ENCODE measurements at regions of chr6 and their contacts with region 1.

Region 1: GRCh38 chr6:118776607-118777549 is 117.1 kb upstream of the ASF1A start:
- DNase-seq: peak; percentile 20
- ATAC-seq: peak; percentile 95
- H3K4me3 ChIP-seq: no peak overlapping the region
- H3K27ac ChIP-seq: no peak overlapping the region
- H3K4me1 ChIP-seq: peaks cover 3% of the 10 kb centered on the region; the same call in 1 of the 2 replicates
- H3K27me3 ChIP-seq: peaks cover 0 to 2% of the 10 kb centered on the region in 2 experiments; a peak in 1 of 4 replicates
- CTCF ChIP-seq: peak; percentile 70 to 74 (median 71)
- EP300 ChIP-seq: no peak
- POLR2A ChIP-seq: no peak
- RAD21 ChIP-seq: peak; percentile 77

Region 2: GRCh38 chr6:117976030-117976651 is 800.7 kb before region 1 on chr6:
- CTCF ChIA-PET with region 1: interaction called, 3 read pairs
- POLR2A ChIA-PET with region 1: no interaction called
- RAD21 ChIA-PET with region 1: no interaction called
- SMC1A ChIA-PET with region 1: no interaction called
- in situ Hi-C with region 1: loop called (anchors 25 kb)
- intact Hi-C with region 1: no loop called
- DNase-seq: no peak
- ATAC-seq: peak; percentile 76
- H3K4me3 ChIP-seq: no peak overlapping the region
- H3K27ac ChIP-seq: no peak overlapping the region
- H3K4me1 ChIP-seq: no peaks in the 10 kb centered on the region
- H3K27me3 ChIP-seq: no peaks in the 10 kb centered on the region
- CTCF ChIP-seq: peak; percentile 61 to 63 (median 62)
- EP300 ChIP-seq: no peak
- POLR2A ChIP-seq: no peak
- RAD21 ChIP-seq: peak; percentile 62

Region 3: DNA sequence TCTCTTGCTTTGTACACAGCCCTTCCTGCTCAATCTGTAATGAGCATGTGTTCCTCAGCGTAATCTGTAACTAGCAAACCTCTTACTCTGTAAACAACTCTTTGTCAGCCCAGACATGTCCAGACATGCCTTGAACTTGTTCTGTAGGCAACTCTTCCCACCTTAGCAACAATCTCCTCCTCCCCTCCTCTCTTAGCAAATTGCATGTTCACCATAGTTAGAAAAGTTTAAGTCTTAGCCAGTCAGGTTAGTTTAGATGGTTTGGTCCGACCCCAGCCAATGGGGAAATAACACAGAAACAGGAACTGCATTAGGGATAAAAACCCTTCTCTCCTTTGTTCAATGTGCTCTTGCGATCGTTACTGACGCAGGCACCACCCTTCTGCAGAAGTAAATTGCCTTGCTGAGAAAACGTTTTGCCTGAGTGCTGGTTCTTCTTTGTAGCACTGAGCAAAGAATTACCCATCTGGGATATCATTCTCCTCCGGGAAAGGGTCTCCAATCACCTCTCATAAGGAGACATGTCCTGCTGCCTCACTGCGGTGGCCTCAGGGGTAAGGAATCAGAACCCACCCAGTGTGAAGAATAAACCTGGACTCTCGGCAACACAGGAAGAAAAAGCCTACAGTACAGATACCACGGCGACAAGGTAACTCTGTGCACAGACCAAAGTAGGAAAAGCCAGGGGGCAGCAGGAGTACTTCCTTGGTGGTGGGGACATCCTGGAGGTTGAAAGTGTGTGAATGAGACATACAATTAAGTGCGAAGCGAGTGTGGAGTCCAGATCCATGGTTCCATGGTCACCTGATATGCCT is 202.6 kb before region 1 on chr6:
- CTCF ChIA-PET with region 1: no interaction called
- POLR2A ChIA-PET with region 1: no interaction called
- RAD21 ChIA-PET with region 1: no interaction called
- SMC1A ChIA-PET with region 1: no interaction called
- in situ Hi-C with region 1: loop called (anchors 10 kb)
- intact Hi-C with region 1: no loop called
- DNase-seq: no peak
- ATAC-seq: no peak
- H3K4me3 ChIP-seq: no peak overlapping the region
- H3K27ac ChIP-seq: 0 out of 2 replicates have a peak overlapping the region, but pooled peaks have one; percentile 19
- H3K4me1 ChIP-seq: no peaks in the 10 kb centered on the region
- H3K27me3 ChIP-seq: no peaks in the 10 kb centered on the region
- CTCF ChIP-seq: no peak
- EP300 ChIP-seq: no peak
- POLR2A ChIP-seq: no peak
- RAD21 ChIP-seq: no peak

Region 4: GRCh38 chr6:118651282-118652050 is 125.4 kb before region 1 on chr6 and contains the start of gene CEP85L:
- CTCF ChIA-PET with region 1: no interaction called
- POLR2A ChIA-PET with region 1: no interaction called
- RAD21 ChIA-PET with region 1: no interaction called
- SMC1A ChIA-PET with region 1: no interaction called
- in situ Hi-C with region 1: no loop called
- intact Hi-C with region 1: loop called (anchors 5 kb)
- DNase-seq: peak; percentile 34
- ATAC-seq: peak; percentile 94
- H3K4me3 ChIP-seq: peak within 1 kb of the TSS; percentile 92
- H3K27ac ChIP-seq: peak within 1 kb of the TSS; percentile 71
- H3K4me1 ChIP-seq: peaks cover 5% of the 10 kb centered on the region
- H3K27me3 ChIP-seq: no peaks in the 10 kb centered on the region
- CTCF ChIP-seq: no peak
- EP300 ChIP-seq: no peak
- POLR2A ChIP-seq: peak; percentile 90
- RAD21 ChIP-seq: no peak
- polyA plus RNA-seq, gene CEP85L: 1.8 to 3.7 TPM

Region 5: DNA sequence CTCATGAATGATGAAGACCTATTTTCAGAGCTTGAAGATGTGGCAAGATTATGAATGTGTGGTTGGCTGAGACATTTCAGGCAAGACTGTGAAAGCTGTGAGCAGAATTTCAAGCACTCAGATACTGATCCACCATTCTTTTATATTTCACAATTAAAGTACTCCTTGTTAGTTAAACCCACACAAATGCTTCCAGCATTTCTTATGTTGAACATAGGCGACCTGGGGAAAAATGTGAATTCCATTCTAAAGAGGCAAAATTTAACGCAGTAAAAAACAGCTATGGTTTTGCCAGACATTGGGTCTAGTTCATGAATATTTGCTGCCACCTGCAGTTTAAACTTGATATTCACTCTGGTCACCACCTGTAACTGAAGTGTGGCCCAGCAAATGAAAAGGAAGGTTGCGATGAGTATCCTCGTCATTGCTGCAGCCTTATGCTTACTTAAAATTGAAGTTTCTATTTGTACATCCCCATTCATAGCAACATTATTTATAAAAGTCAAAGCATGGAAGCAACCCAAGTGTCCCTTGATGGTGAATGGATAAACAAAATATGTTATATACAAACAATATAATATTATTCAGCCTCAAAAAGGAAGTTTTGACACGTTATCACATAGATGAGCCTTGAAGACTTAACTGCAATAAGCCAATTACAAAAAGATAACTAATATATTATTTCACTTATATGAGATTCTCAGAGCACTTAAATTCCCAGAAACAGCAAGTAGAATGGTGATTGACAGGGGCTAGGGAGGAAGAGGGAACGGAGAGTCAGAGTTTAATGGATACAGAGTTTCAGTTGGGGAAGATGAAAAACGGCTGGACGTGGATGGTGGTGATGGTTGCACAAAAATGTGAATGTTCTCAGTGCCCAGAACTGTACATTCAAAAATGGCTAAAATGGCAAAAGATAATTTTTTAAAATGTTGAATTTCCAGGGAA is 334.0 kb after region 1 on chr6:
- CTCF ChIA-PET with region 1: interaction called, 4 read pairs
- POLR2A ChIA-PET with region 1: no interaction called
- RAD21 ChIA-PET with region 1: interaction called, 4 read pairs
- SMC1A ChIA-PET with region 1: no interaction called
- in situ Hi-C with region 1: no loop called
- intact Hi-C with region 1: loop called (anchors 5 kb)
- DNase-seq: peak; percentile 28
- ATAC-seq: peak; percentile 93
- H3K4me3 ChIP-seq: no peak overlapping the region
- H3K27ac ChIP-seq: no peak overlapping the region
- H3K4me1 ChIP-seq: no peaks in the 10 kb centered on the region
- H3K27me3 ChIP-seq: no peaks in the 10 kb centered on the region
- CTCF ChIP-seq: peak; percentile 42 to 72 (median 53); a peak in 5 of 6 replicates
- EP300 ChIP-seq: no peak
- POLR2A ChIP-seq: no peak
- RAD21 ChIP-seq: peak; percentile 81